Breast epithelium (tissue), 4 donors: ENCODE measurements at regions of chr2 and their contacts with region 1.

Region 1: DNA sequence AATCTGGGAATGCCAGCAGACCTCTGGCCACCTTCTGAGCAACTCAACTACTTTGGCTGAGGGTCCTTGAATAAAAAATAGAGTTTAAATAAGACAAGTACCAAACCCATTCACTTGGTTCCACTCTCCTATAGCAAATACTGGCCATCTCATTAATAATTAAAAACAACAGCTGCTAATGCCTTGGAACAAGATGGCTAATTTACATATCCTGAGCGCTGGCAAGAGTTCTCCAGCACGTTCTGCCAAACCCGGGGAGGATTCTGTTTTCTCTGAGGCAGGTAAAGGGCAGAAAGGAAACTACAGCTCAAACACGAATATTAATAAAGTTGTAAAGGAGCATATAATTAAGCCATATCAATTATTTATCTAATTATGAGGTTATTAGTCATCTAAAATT is 1123.7 kb downstream of the TDRD15 start:
- DNase-seq: no peak
- H3K4me3 ChIP-seq: no peak overlapping the region
- H3K27ac ChIP-seq: no peak overlapping the region
- H3K4me1 ChIP-seq: no peaks in the 10 kb centered on the region
- H3K27me3 ChIP-seq: no peaks in the 10 kb centered on the region
- CTCF ChIP-seq: no peak
- POLR2A ChIP-seq: no peak

Region 2: GRCh38 chr2:22273853-22274252 is 26.4 kb after region 1 on chr2:
- intact Hi-C with region 1: loop called (anchors 2 kb)
- DNase-seq: no peak
- H3K4me3 ChIP-seq: no peak overlapping the region
- H3K27ac ChIP-seq: no peak overlapping the region
- H3K4me1 ChIP-seq: no peaks in the 10 kb centered on the region
- H3K27me3 ChIP-seq: no peaks in the 10 kb centered on the region
- CTCF ChIP-seq: no peak
- POLR2A ChIP-seq: no peak